ENCODE measurements at regions of chr19 and their contacts with region 1.

Region 1: GRCh38 chr19:39187559-39187957 is 9.2 kb upstream of the NCCRP1 start:
- ATAC-seq: peak in 2 of 8 experiments; percentile 10 to 27
- H3K4me3 ChIP-seq: no peak overlapping the region
- H3K27ac ChIP-seq: no peak overlapping the region
- H3K4me1 ChIP-seq: no peaks in the 10 kb centered on the region

Region 2: DNA sequence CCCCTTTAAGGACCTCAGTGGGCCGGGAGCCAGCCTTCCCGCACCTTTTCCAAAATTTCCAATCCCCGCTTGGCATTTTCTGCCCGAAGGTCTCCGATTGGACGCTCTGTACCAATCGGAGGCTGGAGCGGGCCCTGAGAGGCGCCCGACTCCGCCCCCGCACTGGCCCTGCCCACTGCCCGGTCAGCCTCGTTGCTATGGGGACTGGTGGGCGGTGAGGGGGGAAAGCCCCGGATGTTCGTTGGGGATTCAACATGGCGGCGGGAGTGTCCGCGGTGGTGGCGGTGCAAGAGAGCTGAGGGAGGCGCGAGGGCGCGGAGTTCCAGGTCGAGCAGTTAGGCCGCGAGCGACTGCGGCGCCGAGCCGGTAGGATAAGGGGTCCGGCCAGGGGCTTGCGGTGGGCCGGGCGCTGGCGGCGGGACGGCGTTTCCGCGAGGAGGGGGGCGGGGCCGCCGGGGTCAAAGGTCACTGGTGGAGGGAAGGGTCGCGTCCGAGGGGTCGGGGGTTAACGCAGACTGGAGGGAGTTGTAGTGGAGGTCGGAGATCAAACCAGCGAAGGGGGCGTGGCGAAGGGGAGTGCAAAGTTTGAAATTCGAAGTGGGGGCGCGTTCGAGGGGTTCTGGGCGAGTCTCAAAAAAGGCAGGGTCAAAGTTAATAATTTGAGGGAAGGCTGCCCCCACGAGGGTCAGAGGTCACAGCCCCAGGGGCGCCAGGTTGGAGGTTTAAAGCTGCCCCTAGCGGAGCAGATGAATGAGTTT is 61.8 kb before region 1 on chr19 and contains the start of gene PAK4:
- in situ Hi-C with region 1: loop called in 1 of 9 experiments (anchors 5 kb)
- ATAC-seq: peak; percentile 82 to 100 (median 96)
- H3K4me3 ChIP-seq: peak within 1 kb of the TSS; percentile 78 to 99 (median 81)
- H3K27ac ChIP-seq: peak within 1 kb of the TSS; percentile 89 to 92
- H3K4me1 ChIP-seq: peaks cover 17 to 22% of the 10 kb centered on the region in 2 donors
- total RNA-seq, gene PAK4: 6.5 to 42.8 (median 11.9) TPM

Region 3: GRCh38 chr19:39390755-39391592 is 203.4 kb after region 1 on chr19 and contains the starts of genes MED29 and PAF1:
- in situ Hi-C with region 1: no loop called
- ATAC-seq: peak; percentile 89 to 95 (median 95)
- H3K4me3 ChIP-seq: peak within 1 kb of the TSS; percentile 62 to 86 (median 68)
- H3K27ac ChIP-seq: peak within 1 kb of the TSS; percentile 98 to 99
- H3K4me1 ChIP-seq: peaks cover 5 to 13% of the 10 kb centered on the region in 2 donors
- total RNA-seq, gene MED29: 19.9 to 45.6 (median 26.2) TPM
- total RNA-seq, gene PAF1: 23.7 to 59.7 (median 37.0) TPM

Measured in motor neuron (in vitro differentiated cells).